WTC11 (cell line): ENCODE measurements at regions of chr9 and their contacts with region 1.

Region 1: GRCh38 chr9:126599047-126599650 is 14.6 kb upstream of the LMX1B start:
- DNase-seq: peak; percentile 53
- ATAC-seq: peak; percentile 67
- H3K4me3 Mint-ChIP-seq: no peak overlapping the region
- H3K27ac Mint-ChIP-seq: no peak overlapping the region
- H3K4me1 Mint-ChIP-seq: no peaks in the 10 kb centered on the region
- H3K27me3 Mint-ChIP-seq: no peaks in the 10 kb centered on the region
- CTCF ChIP-seq: 0 out of 2 replicates have a peak, but pooled peaks have one; percentile 17

Region 2: GRCh38 chr9:126546036-126546435 is 53.1 kb before region 1 on chr9:
- CTCF ChIA-PET with region 1: no interaction called
- POLR2A ChIA-PET with region 1: no interaction called
- DNase-seq: no peak
- ATAC-seq: no peak
- H3K4me3 Mint-ChIP-seq: no peak overlapping the region
- H3K27ac Mint-ChIP-seq: no peak overlapping the region
- H3K4me1 Mint-ChIP-seq: no peaks in the 10 kb centered on the region
- H3K27me3 Mint-ChIP-seq: no peaks in the 10 kb centered on the region; the same call in 1 of the 2 replicates
- CTCF ChIP-seq: no peak

Region 3: DNA sequence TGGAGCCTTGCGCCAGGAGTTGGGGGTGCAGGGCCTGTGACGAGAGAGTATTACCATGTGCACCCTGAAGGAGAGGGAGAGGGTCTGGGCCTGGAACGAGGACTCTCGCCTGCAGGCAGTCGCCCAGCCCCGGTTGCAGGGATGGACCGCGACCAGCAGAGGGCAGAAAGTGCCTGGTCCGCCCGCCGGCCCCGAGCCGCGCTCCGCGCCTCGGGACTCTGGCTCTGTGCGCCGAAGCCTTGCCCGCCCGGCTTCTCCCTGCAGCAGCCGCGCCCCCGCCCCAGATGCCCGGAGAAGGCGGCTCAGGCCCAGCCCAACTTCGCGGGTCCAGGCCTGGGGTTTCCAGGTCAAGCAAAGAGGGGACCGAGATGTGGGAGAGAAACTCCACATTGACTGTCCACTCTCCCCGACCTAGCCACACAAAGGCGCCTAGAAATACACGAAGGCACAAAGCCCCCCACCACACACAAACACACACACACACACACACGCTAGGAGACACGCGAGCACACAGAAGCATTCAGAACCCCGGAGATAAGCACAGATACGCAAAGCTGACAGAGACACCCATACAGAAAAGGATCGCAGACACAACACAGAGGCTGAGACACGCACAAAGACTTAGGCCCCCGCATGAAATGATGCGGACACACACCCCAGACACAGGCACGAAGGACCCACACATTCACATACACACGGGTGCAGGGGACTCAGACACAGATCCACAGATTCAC is 12.6 kb after region 1 on chr9:
- CTCF ChIA-PET with region 1: interaction called, 14 read pairs
- POLR2A ChIA-PET with region 1: no interaction called
- DNase-seq: peak; percentile 94
- ATAC-seq: peak; percentile 64
- H3K4me3 Mint-ChIP-seq: peak overlapping the region; percentile 58
- H3K27ac Mint-ChIP-seq: no peak overlapping the region
- H3K4me1 Mint-ChIP-seq: peaks cover 32% of the 10 kb centered on the region
- H3K27me3 Mint-ChIP-seq: peaks cover 94% of the 10 kb centered on the region
- CTCF ChIP-seq: peak; percentile 81